OCI-LY7 (cell line): ENCODE measurements at regions of chr2 and their contacts with region 1.

Region 1: GRCh38 chr2:209367091-209367747 is 56.6 kb upstream of the MAP2 start:
- DNase-seq: no peak
- H3K4me3 ChIP-seq: no peak overlapping the region
- H3K27ac ChIP-seq: no peak overlapping the region
- H3K4me1 ChIP-seq: no peaks in the 10 kb centered on the region
- CTCF ChIP-seq: no peak

Region 2: GRCh38 chr2:208783187-208783586 is 584.0 kb before region 1 on chr2:
- CTCF ChIA-PET with region 1: no interaction called
- POLR2A ChIA-PET with region 1: no interaction called
- intact Hi-C with region 1: no loop called
- DNase-seq: no peak
- H3K4me3 ChIP-seq: no peak overlapping the region
- H3K27ac ChIP-seq: no peak overlapping the region
- H3K4me1 ChIP-seq: no peaks in the 10 kb centered on the region
- CTCF ChIP-seq: no peak

Region 3: GRCh38 chr2:209236377-209236776 is 130.8 kb before region 1 on chr2:
- CTCF ChIA-PET with region 1: no interaction called
- POLR2A ChIA-PET with region 1: no interaction called
- intact Hi-C with region 1: no loop called
- DNase-seq: no peak
- H3K4me3 ChIP-seq: no peak overlapping the region
- H3K27ac ChIP-seq: no peak overlapping the region
- H3K4me1 ChIP-seq: no peaks in the 10 kb centered on the region
- CTCF ChIP-seq: no peak

Region 4: DNA sequence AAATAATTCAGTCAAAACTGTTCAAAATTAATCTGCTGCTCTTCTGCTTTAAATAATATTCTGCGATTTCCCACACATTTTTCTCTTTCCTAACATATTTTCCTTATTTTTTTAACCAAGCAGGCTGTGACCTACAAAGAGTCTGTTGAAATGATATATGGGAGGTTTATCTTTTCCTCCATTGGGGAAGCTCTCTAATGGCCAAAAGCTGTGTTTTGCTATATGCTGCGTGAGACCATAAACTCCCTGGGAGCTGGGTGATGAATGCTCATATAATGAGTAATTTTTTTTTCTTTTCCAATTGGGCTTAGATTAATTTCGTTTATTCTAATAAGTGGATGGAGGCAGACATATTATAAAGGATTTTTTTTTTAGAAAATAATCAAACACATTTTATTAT is 15.6 kb before region 1 on chr2:
- CTCF ChIA-PET with region 1: no interaction called
- POLR2A ChIA-PET with region 1: interaction called, 6 read pairs
- intact Hi-C with region 1: loop called (anchors 1 kb)
- DNase-seq: no peak
- H3K4me3 ChIP-seq: no peak overlapping the region
- H3K27ac ChIP-seq: no peak overlapping the region
- H3K4me1 ChIP-seq: no peaks in the 10 kb centered on the region
- CTCF ChIP-seq: no peak

Region 5: DNA sequence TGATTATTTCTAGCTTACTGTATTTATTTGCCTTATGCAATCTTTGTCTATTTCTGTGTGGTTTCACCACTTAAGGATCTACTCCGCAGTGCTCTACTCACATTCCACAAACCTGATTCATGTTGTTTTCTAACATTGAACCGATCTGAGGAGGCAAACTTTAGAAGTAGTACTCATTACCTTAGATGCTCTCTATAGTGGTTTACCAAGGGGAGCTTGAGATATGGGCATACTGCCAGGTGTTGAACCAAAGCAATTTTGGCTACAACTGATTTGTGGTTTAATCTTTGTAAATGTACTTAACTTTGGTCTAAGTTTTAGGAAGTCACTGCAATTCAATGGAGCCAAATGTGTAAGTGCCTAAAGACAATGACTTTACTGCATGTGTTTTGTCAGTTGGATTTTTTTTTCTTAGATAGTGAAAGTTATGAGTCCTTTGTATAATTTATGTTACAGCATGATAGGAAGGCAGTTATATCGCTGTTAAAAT is 106.8 kb after region 1 on chr2:
- CTCF ChIA-PET with region 1: no interaction called
- POLR2A ChIA-PET with region 1: no interaction called
- intact Hi-C with region 1: no loop called
- DNase-seq: no peak
- H3K4me3 ChIP-seq: no peak overlapping the region
- H3K27ac ChIP-seq: no peak overlapping the region
- H3K4me1 ChIP-seq: no peaks in the 10 kb centered on the region
- CTCF ChIP-seq: no peak